CD4-positive, alpha-beta T cell (primary cell): ENCODE measurements at regions of chr5 and their contacts with region 1.

Region 1: GRCh38 chr5:141359790-141360426 is at the start of gene PCDHGB2:
- DNase-seq: peak in 3 of 14 experiments; percentile 48 to 58 (median 50)
- ATAC-seq: no peak
- H3K4me3 ChIP-seq: peak within 1 kb of the TSS; percentile 45
- H3K4me3 Mint-ChIP-seq: peak within 1 kb of the TSS; percentile 81
- H3K27ac ChIP-seq: no peak within 1 kb of the TSS
- H3K27ac Mint-ChIP-seq: no peak within 1 kb of the TSS
- H3K4me1 ChIP-seq: peaks cover 8% of the 10 kb centered on the region
- H3K4me1 Mint-ChIP-seq: peaks cover 6% of the 10 kb centered on the region
- H3K27me3 ChIP-seq: peaks cover 55 to 88% of the 10 kb centered on the region in 2 experiments
- H3K27me3 Mint-ChIP-seq: peaks cover 91% of the 10 kb centered on the region
- CTCF ChIP-seq: no peak
- total RNA-seq, gene PCDHGB2: 0.19 to 0.20 TPM

Region 2: GRCh38 chr5:141223112-141223783 is 136.7 kb before region 1 on chr5 and contains the start of gene PCDHB14:
- CTCF ChIA-PET with region 1: no interaction called
- POLR2A ChIA-PET with region 1: no interaction called
- intact Hi-C with region 1: loop called in 1 of 2 experiments (anchors 10 kb)
- DNase-seq: peak in 3 of 14 experiments; percentile 5 to 37 (median 31)
- ATAC-seq: no peak
- H3K4me3 ChIP-seq: no peak within 1 kb of the TSS
- H3K4me3 Mint-ChIP-seq: peak within 1 kb of the TSS; percentile 27
- H3K27ac ChIP-seq: no peak within 1 kb of the TSS
- H3K27ac Mint-ChIP-seq: no peak within 1 kb of the TSS
- H3K4me1 ChIP-seq: peaks cover 5% of the 10 kb centered on the region
- H3K4me1 Mint-ChIP-seq: no peaks in the 10 kb centered on the region
- H3K27me3 ChIP-seq: peaks cover 31 to 52% of the 10 kb centered on the region in 2 experiments
- H3K27me3 Mint-ChIP-seq: peaks cover 71% of the 10 kb centered on the region
- CTCF ChIP-seq: no peak
- total RNA-seq, gene PCDHB14: not detected

Region 3: DNA sequence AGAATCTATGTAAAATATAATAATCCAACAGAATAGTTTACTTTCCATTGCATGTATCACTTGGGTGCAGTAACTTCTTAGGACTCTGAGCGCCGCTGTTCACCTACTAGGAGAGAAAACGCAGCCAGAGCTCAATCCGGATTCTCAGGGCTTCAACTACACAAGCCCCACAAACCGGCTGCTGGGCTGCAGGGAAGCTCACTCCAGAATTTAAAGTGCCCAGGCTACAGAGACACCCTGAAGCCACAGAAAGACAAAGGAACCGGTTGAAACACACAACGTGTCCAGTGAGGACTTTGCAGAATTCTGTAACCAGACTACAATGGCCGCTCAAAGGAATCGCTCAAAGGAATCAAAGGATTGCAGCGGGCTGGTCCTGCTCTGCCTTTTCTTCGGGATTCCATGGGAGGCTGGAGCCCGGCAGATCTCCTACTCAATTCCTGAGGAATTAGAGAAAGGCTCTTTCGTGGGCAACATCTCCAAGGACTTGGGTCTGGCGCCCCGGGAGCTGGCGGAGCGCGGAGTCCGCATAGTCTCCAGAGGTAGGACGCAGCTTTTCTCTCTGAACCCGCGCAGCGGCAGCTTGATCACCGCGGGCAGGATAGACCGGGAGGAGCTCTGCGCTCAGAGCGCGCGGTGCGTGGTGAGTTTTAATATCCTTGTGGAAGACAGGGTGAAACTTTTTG is 53.1 kb after region 1 on chr5 and contains the start of gene PCDHGA10:
- CTCF ChIA-PET with region 1: no interaction called
- POLR2A ChIA-PET with region 1: interaction called, 3 read pairs
- intact Hi-C with region 1: loop called in 1 of 2 experiments (anchors 10 kb)
- DNase-seq: peak in 13 of 14 experiments; percentile 26 to 72 (median 39)
- ATAC-seq: peak; percentile 88
- H3K4me3 ChIP-seq: peak within 1 kb of the TSS; percentile 53
- H3K4me3 Mint-ChIP-seq: peak within 1 kb of the TSS; percentile 92
- H3K27ac ChIP-seq: no peak within 1 kb of the TSS
- H3K27ac Mint-ChIP-seq: no peak within 1 kb of the TSS
- H3K4me1 ChIP-seq: peaks cover 15% of the 10 kb centered on the region
- H3K4me1 Mint-ChIP-seq: peaks cover 24% of the 10 kb centered on the region
- H3K27me3 ChIP-seq: peaks cover 63 to 84% of the 10 kb centered on the region in 2 experiments
- H3K27me3 Mint-ChIP-seq: peaks cover 82% of the 10 kb centered on the region
- CTCF ChIP-seq: peak; percentile 71
- total RNA-seq, gene PCDHGA10: 0.08 TPM in 1 of 2 experiments, not detected in the other